ENCODE measurements at regions of chr7 and their contacts with region 1.

Region 1: GRCh38 chr7:113790025-113790424 is 128.8 kb downstream of the PPP1R3A start:
- DNase-seq: peak in 1 of 2 donors; percentile 62
- ATAC-seq: peak; percentile 90 to 100 (median 98)
- H3K4me3 ChIP-seq: no peak overlapping the region
- H3K27ac ChIP-seq: peak overlapping the region in 4 of 10 donors; percentile 21 to 65 (median 38)
- H3K4me1 ChIP-seq: peaks cover 0 to 13% (median 0%) of the 10 kb centered on the region in 9 donors
- H3K27me3 ChIP-seq: no peaks in the 10 kb centered on the region
- CTCF ChIP-seq: no peak

Region 2: DNA sequence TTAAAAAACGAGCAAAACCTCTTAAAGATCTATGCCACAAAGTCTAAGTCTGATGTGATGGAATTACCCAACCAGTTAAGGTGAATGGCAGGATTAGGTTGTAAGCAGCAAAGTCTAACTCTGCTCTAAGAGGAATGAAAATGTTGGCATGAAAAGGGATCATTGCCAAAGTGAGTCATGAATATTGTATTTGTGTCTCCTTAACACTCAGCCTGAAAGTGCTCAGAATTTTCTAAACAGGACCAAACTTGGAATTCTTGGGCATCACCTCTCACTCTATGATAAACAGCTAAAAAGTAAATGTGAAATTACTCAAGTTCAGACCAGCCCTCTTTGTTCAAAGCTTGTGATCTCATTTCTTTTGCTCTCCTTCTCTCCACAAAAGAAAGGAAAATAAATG is 101.8 kb after region 1 on chr7:
- intact Hi-C with region 1: loop called in 1 of 10 experiments (anchors 5 kb)
- DNase-seq: no peak
- ATAC-seq: peak in 4 of 8 donors; percentile 37 to 68 (median 57)
- H3K4me3 ChIP-seq: no peak overlapping the region
- H3K27ac ChIP-seq: peak overlapping the region in 6 of 10 donors; percentile 7 to 63 (median 46)
- H3K4me1 ChIP-seq: peaks cover 0 to 24% (median 0%) of the 10 kb centered on the region in 9 donors
- H3K27me3 ChIP-seq: no peaks in the 10 kb centered on the region
- CTCF ChIP-seq: no peak

Region 3: DNA sequence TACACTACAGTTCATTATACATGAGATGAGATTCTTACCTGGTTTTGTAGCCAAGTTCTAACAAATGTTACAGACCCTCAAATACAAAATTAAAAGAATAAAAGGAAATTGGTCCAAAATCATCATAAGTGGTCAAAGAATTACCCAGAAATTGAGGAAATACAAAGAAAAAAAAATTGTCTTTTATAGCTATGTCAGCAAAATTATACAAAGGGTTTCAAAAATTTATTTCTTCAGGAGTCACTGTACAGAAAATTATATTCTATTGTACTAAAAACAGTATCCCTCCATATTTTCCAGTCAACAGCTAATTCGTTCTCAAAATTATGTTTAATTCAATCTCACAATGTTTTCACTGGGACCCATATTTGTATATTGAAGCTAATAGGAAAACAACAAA is 114.5 kb after region 1 on chr7:
- intact Hi-C with region 1: no loop called
- DNase-seq: no peak
- ATAC-seq: no peak
- H3K4me3 ChIP-seq: no peak overlapping the region
- H3K27ac ChIP-seq: no peak overlapping the region
- H3K4me1 ChIP-seq: peaks cover 0 to 6% (median 0%) of the 10 kb centered on the region in 9 donors
- H3K27me3 ChIP-seq: no peaks in the 10 kb centered on the region
- CTCF ChIP-seq: no peak